Common myeloid progenitor, CD34-positive (primary cell): ENCODE measurements at regions of chr7 and their contacts with region 1.

Region 1: DNA sequence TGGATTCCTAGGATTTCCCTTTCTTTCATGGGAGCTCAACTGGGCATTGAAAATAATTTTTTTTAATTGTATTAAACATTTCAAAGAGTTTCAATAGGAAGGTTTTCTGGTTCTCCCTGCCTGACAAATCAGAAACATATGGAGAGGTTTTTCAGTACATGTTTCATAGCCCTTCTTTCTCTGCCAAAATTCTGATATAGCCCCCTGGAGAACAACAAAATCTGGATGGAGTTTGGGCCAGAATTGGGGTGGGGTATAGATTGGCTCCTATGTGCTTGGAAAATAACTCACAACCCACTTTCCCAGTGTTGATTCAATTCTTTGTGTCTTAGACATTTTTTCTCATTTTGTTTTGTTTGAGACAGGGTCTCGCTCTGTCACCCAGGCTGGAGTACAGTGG is 24.6 kb upstream of the EIF4H start:
- DNase-seq: no peak
- H3K4me3 ChIP-seq: no peak overlapping the region
- H3K27ac ChIP-seq: no peak overlapping the region
- H3K4me1 ChIP-seq: no peaks in the 10 kb centered on the region
- H3K27me3 ChIP-seq: no peaks in the 10 kb centered on the region

Region 2: DNA sequence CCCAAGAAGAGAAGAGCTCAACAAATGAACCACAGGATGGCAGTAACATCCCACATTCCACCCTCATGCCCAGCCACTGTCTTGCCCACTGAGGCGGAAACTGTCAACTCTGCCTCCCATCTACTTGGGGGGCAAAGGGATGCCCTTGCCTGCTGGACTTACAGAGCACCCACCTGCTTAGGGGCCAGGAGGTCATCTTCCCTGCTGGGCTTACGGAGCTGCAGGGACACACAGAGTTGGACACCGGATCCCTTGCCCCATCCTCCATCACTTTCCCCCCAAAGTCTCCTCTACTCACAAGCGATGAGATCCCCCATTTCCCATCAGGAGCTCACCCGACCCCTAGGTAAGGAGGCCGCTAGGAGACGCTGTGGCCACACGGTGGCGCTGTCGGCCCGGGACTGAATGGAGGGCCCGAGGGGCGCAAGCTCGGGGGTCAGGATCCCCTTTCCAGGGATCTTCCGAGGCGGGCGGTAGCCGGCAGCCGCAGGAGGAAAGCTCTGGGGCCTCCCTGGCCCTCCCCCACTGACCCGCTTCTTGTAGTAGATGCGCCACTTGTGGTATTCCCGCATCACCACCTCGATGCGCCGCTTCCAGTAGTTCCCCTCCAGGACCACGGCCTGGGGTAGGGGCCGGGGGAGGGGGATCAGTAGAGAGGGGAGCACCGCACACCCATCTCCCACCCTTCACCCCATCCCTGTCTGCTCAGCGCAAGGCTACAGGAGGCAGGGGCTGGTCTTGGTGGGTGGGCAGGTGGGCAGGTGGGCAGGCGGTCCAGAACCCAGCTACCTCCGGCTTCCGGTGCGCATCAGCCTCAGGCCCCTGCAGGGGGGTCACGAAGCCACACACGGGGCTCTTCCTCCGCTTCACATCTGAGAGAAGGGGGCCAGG is 542.6 kb before region 1 on chr7:
- CTCF ChIA-PET with region 1: no interaction called
- POLR2A ChIA-PET with region 1: no interaction called
- DNase-seq: peak; percentile 50 to 68 (median 59)
- H3K4me3 ChIP-seq: no peak overlapping the region
- H3K27ac ChIP-seq: no peak overlapping the region
- H3K4me1 ChIP-seq: peaks cover 0 to 3% (median 1%) of the 10 kb centered on the region in 4 experiments
- H3K27me3 ChIP-seq: peaks cover 3 to 86% (median 16%) of the 10 kb centered on the region in 5 experiments

Region 3: GRCh38 chr7:73971704-73972341 is 177.8 kb before region 1 on chr7:
- CTCF ChIA-PET with region 1: no interaction called
- POLR2A ChIA-PET with region 1: no interaction called
- DNase-seq: no peak
- H3K4me3 ChIP-seq: no peak overlapping the region
- H3K27ac ChIP-seq: no peak overlapping the region
- H3K4me1 ChIP-seq: peaks cover 0 to 7% (median 0%) of the 10 kb centered on the region in 4 experiments
- H3K27me3 ChIP-seq: no peaks in the 10 kb centered on the region

Region 4: GRCh38 chr7:74164985-74165456 is 15.4 kb after region 1 on chr7:
- CTCF ChIA-PET with region 1: interaction called, 11 read pairs
- POLR2A ChIA-PET with region 1: no interaction called
- DNase-seq: peak in 1 of 3 donors; percentile 35
- H3K4me3 ChIP-seq: no peak overlapping the region
- H3K27ac ChIP-seq: no peak overlapping the region
- H3K4me1 ChIP-seq: no peaks in the 10 kb centered on the region
- H3K27me3 ChIP-seq: no peaks in the 10 kb centered on the region